ENCODE measurements at regions of chr1 and their contacts with region 1.

Region 1: DNA sequence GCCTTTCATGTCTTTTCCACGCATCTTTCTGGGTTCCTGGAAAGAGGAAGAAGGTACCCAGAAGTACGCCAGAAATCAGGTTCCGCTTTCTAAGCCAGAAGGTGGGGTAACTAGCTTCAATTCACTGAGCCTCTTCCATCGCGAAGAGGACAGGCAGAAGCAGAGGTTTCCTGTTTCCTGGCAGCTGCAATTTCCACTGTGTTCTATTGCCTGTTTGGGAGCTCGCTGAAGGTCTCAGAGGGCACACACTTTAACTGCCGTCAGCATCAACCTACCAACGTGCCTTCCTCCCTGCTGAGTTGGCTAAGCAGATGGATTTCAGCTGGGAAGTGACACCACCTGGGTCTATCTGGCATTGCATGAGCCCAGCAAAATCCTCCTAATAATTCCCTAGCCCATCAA is 10.0 kb downstream of the NCF2 start:
- DNase-seq: peak; percentile 55
- H3K4me3 Mint-ChIP-seq: peak overlapping the region; percentile 23
- H3K27ac Mint-ChIP-seq: peak overlapping the region; percentile 86
- H3K4me1 Mint-ChIP-seq: peaks cover 52% of the 10 kb centered on the region
- H3K27me3 Mint-ChIP-seq: peaks cover 5% of the 10 kb centered on the region

Region 2: GRCh38 chr1:183562701-183563100 is 17.6 kb before region 1 on chr1:
- CTCF ChIA-PET with region 1: interaction called, 12 read pairs
- DNase-seq: no peak
- H3K4me3 Mint-ChIP-seq: no peak overlapping the region
- H3K27ac Mint-ChIP-seq: peak overlapping the region; percentile 62
- H3K4me1 Mint-ChIP-seq: peaks cover 9% of the 10 kb centered on the region
- H3K27me3 Mint-ChIP-seq: peaks cover 4% of the 10 kb centered on the region

Region 3: GRCh38 chr1:183590244-183591191 is 10.2 kb after region 1 on chr1 and contains the start of gene NCF2:
- CTCF ChIA-PET with region 1: interaction called, 19 read pairs
- DNase-seq: peak; percentile 66
- H3K4me3 Mint-ChIP-seq: peak within 1 kb of the TSS; percentile 62
- H3K27ac Mint-ChIP-seq: peak within 1 kb of the TSS; percentile 87
- H3K4me1 Mint-ChIP-seq: peaks cover 42% of the 10 kb centered on the region
- H3K27me3 Mint-ChIP-seq: peaks cover 5% of the 10 kb centered on the region

Measured in activated naive CD4-positive, alpha-beta T cell treated with anti-CD3 and anti-CD28 coated beads, Interleukin-2, amount 10 ng/mL, durations not matched to agents 7 days and 5 days (primary cell).